Heart right ventricle (tissue), 16 donors: ENCODE measurements at regions of chr10 and their contacts with region 1.

Region 1: DNA sequence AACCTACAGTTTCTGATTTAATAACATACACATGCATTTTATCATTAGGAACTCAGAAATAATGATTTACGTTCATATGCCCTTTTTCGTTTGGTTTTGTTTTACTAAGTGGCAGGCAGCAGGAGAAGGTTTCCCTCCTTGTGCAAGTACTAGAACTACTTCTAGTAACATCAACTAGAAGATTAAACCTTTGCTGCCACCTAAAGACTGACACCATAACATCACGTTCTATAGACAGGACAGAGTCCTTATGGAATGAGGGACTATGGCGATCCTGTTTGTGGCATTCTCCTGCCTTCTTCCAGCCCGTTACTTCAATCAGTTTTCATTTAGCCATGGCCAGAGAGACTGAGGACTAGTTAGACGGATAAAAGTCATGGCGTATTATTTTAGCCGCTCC is 53.2 kb downstream of the GAD2 start:
- DNase-seq: no peak
- ATAC-seq: no peak
- H3K4me3 ChIP-seq: no peak overlapping the region
- H3K27ac ChIP-seq: no peak overlapping the region
- H3K4me1 ChIP-seq: no peaks in the 10 kb centered on the region
- H3K27me3 ChIP-seq: peaks cover 0 to 31% (median 0%) of the 10 kb centered on the region in 7 donors
- CTCF ChIP-seq: peak in 5 of 9 donors; percentile 13 to 38 (median 27)

Region 2: GRCh38 chr10:25875556-25876165 is 394.1 kb before region 1 on chr10:
- intact Hi-C with region 1: loop called in 3 of 10 experiments (anchors 5 to 10 kb)
- DNase-seq: peak; percentile 40 to 61
- ATAC-seq: peak in 1 of 8 donors; percentile 53
- H3K4me3 ChIP-seq: no peak overlapping the region
- H3K27ac ChIP-seq: no peak overlapping the region
- H3K4me1 ChIP-seq: no peaks in the 10 kb centered on the region
- H3K27me3 ChIP-seq: no peaks in the 10 kb centered on the region
- CTCF ChIP-seq: peak; percentile 66 to 89 (median 84)